Left ventricle myocardium inferior (tissue), 1 donor: ENCODE measurements at regions of chr15 and their contacts with region 1.

Region 1: GRCh38 chr15:68672781-68673205 is 94.0 kb downstream of the CORO2B start:
- DNase-seq: no peak
- H3K4me3 ChIP-seq: no peak overlapping the region
- H3K27ac ChIP-seq: no peak overlapping the region
- H3K4me1 ChIP-seq: peaks cover 25% of the 10 kb centered on the region
- H3K27me3 ChIP-seq: no peaks in the 10 kb centered on the region
- CTCF ChIP-seq: peak; percentile 41

Region 2: GRCh38 chr15:68559345-68560310 is 113.2 kb before region 1 on chr15:
- intact Hi-C with region 1: loop called (anchors 5 kb)
- DNase-seq: peak; percentile 83
- H3K4me3 ChIP-seq: peak overlapping the region; percentile 67
- H3K27ac ChIP-seq: peak overlapping the region; percentile 34
- H3K4me1 ChIP-seq: peaks cover 16% of the 10 kb centered on the region
- H3K27me3 ChIP-seq: peaks cover 6% of the 10 kb centered on the region
- CTCF ChIP-seq: peak; percentile 96

Region 3: GRCh38 chr15:68578174-68578979 is 94.4 kb before region 1 on chr15:
- intact Hi-C with region 1: loop called (anchors 5 kb)
- DNase-seq: peak; percentile 82
- H3K4me3 ChIP-seq: peak overlapping the region; percentile 83
- H3K27ac ChIP-seq: peak overlapping the region; percentile 91
- H3K4me1 ChIP-seq: peaks cover 53% of the 10 kb centered on the region
- H3K27me3 ChIP-seq: no peaks in the 10 kb centered on the region
- CTCF ChIP-seq: peak; percentile 76

Region 4: GRCh38 chr15:68775671-68776476 is 103.1 kb after region 1 on chr15:
- intact Hi-C with region 1: no loop called
- DNase-seq: peak; percentile 90
- H3K4me3 ChIP-seq: no peak overlapping the region
- H3K27ac ChIP-seq: peak overlapping the region; percentile 75
- H3K4me1 ChIP-seq: peaks cover 30% of the 10 kb centered on the region
- H3K27me3 ChIP-seq: no peaks in the 10 kb centered on the region
- CTCF ChIP-seq: no peak